ENCODE measurements at regions of chr19 and their contacts with region 1.

Region 1: DNA sequence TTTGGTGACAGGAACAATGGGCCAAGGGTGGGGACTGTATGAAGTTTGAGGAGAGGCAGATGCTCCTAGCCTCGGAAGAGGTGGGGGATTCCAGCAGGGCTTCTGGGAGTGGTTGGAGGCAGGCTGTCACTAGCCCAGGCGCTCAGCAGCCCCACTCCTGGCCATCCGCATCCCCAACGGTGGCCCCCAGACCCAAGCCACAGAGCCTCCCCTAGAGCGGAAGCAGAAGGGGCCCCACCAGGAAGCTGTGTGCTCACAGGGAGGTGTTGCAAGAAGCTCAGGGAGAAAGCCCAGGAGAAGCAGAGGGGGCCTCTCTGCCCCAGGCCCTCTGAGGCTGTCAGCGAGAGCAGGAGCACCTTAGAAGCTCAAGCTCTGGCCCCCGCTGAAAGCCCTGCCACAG is 8.3 kb downstream of the PRAM1 start:
- DNase-seq: no peak
- H3K4me3 Mint-ChIP-seq: no peak overlapping the region
- H3K27ac Mint-ChIP-seq: no peak overlapping the region
- H3K4me1 Mint-ChIP-seq: peaks cover 11% of the 10 kb centered on the region
- H3K27me3 Mint-ChIP-seq: no peaks in the 10 kb centered on the region
- CTCF ChIP-seq: no peak

Region 2: GRCh38 chr19:8438236-8438635 is 55.9 kb before region 1 on chr19:
- CTCF ChIA-PET with region 1: no interaction called
- POLR2A ChIA-PET with region 1: no interaction called
- intact Hi-C with region 1: no loop called
- DNase-seq: no peak
- H3K4me3 Mint-ChIP-seq: no peak overlapping the region
- H3K27ac Mint-ChIP-seq: no peak overlapping the region
- H3K4me1 Mint-ChIP-seq: no peaks in the 10 kb centered on the region
- H3K27me3 Mint-ChIP-seq: no peaks in the 10 kb centered on the region
- CTCF ChIP-seq: no peak

Region 3: DNA sequence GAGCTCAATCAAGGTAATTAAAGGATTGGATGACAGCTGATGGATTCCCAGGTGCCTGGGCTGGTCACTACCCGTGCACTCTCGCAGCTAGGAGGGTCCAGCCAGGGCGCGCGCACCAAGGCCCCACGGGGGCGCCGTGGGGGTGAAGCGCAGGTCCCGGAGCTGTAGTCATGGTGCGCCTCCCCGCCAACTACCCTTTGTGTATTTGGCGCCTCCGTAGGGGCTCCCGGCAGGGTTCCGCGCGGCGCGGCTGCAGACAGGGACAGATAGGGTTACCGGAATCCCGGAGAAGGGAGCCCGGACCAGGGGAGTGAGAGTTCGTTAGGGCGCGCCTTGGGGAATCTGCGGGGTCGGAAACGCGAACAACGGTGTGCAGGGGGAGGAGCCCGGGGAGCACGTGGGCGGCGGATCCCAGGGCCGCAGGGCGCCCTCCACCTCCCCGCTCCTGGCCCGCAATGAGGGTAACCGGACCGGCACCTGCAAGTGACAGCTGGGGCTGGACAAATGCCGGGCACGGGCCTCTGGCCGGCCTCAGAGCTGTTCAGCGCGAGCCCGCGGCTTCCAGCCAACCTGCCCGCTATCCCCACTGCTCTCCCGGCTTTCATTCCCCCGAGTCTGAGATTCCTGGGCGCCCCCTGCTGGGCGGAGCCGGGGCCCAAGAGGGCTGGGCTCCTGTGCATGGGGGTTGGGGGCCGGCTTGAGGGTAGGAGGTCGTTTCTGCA is 11.7 kb after region 1 on chr19:
- CTCF ChIA-PET with region 1: interaction called, 15 read pairs
- POLR2A ChIA-PET with region 1: interaction called, 3 read pairs
- intact Hi-C with region 1: no loop called
- DNase-seq: peak; percentile 78
- H3K4me3 Mint-ChIP-seq: peak overlapping the region; percentile 86
- H3K27ac Mint-ChIP-seq: no peak overlapping the region
- H3K4me1 Mint-ChIP-seq: peaks cover 5% of the 10 kb centered on the region
- H3K27me3 Mint-ChIP-seq: no peaks in the 10 kb centered on the region
- CTCF ChIP-seq: peak; percentile 83

Measured in MCF 10A (cell line).